BJ (cell line): ENCODE measurements at regions of chr3 and their contacts with region 1.

Region 1: GRCh38 chr3:122392868-122393844 is 9.2 kb downstream of the FAM162A start:
- DNase-seq: no peak
- H3K4me3 ChIP-seq: no peak overlapping the region
- H3K27me3 ChIP-seq: no peaks in the 10 kb centered on the region
- CTCF ChIP-seq: peak; percentile 73

Region 2: DNA sequence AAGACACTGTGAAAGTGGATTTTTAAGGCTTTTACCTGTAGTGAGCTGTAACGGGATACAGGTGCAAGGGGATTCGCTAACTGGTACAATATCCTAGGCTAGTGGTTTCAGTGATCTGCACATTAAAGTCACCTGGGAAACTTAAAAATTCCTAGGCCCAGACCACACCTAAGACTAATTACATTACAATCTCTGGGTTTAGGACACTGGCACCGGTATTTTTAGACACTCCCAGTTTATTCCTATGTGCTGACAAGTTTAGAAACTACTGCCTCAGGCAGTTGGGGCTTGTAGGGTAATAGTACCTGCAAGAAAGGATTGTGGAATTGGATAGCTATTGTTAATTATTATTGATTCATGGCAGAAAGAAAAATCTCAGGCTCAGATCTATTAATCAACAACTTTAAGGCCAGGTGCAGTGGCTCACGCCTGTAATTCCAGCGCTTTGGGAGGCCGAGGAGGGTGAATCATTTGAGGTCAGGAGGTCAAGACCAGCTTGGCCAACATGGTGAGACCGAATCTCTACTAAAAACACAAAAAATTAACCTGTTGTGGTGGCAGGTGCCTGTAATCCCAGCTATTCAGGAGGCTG is 260.1 kb before region 1 on chr3:
- CTCF ChIA-PET with region 1: no interaction called
- POLR2A ChIA-PET with region 1: no interaction called
- DNase-seq: no peak
- H3K4me3 ChIP-seq: no peak overlapping the region
- H3K27me3 ChIP-seq: no peaks in the 10 kb centered on the region
- CTCF ChIP-seq: no peak

Region 3: DNA sequence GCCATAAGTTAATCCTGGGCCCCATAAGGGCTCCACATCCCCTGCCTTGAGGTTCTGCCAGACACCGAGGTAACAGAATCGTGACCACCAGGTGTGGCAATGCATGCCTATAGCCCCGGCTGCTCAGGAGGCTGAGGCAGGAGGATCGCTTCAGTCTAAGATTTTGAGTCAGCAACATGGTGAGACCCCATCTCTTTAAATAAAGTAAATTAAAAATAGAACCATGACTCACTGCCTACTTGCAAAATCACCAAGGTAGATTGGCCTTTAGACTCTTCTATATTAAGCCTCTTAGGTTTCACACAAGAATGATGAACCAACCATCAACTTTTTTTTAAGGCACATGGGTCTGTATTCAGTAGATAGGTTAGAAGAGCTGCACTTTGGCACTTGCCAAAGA is 13.0 kb after region 1 on chr3:
- CTCF ChIA-PET with region 1: interaction called, 10 read pairs
- POLR2A ChIA-PET with region 1: no interaction called
- DNase-seq: no peak
- H3K4me3 ChIP-seq: no peak overlapping the region
- H3K27me3 ChIP-seq: no peaks in the 10 kb centered on the region
- CTCF ChIP-seq: no peak